Naive thymus-derived CD4-positive, alpha-beta T cell (primary cell): ENCODE measurements at regions of chr10 and their contacts with region 1.

Region 1: GRCh38 chr10:69222157-69223027 is 2.3 kb downstream of the HKDC1 start:
- DNase-seq: peak in 8 of 9 donors; percentile 21 to 80 (median 41)
- ATAC-seq: peak; percentile 88
- H3K4me3 ChIP-seq: peak overlapping the region; percentile 34
- H3K4me3 Mint-ChIP-seq: peak overlapping the region in 4 of 10 donors; percentile 17 to 83 (median 50)
- H3K27ac ChIP-seq: no peak overlapping the region
- H3K27ac Mint-ChIP-seq: peak overlapping the region in 4 of 9 donors; percentile 18 to 91 (median 56)
- H3K4me1 ChIP-seq: peaks cover 11 to 37% of the 10 kb centered on the region in 2 donors
- H3K4me1 Mint-ChIP-seq: peaks cover 0 to 47% (median 15%) of the 10 kb centered on the region in 7 donors
- H3K27me3 ChIP-seq: no peaks in the 10 kb centered on the region
- H3K27me3 Mint-ChIP-seq: no peaks in the 10 kb centered on the region

Region 2: DNA sequence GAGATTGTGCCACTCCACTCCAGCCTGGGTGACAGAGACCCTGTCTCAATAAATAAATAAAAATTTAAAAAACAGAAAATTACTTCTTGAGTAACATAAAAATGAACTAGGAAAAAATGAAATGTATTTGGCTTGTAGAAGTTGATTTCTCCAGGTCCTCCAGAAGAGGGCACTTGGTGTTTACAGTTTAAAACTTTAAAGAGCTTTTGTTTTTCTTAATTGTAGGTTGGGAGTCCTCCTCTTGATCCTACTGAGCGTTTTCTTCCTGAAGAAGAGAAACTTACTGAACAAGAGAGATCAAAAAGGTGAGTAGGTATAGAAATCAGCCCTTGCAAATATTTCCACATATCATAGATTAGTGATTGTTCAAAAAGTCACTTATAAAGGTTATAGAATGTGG is 217.6 kb before region 1 on chr10:
- CTCF ChIA-PET with region 1: no interaction called
- POLR2A ChIA-PET with region 1: no interaction called
- intact Hi-C with region 1: loop called in 1 of 2 experiments (anchors 2 kb)
- DNase-seq: peak in 7 of 9 donors; percentile 42 to 72 (median 60)
- ATAC-seq: peak; percentile 74
- H3K4me3 ChIP-seq: no peak overlapping the region
- H3K4me3 Mint-ChIP-seq: no peak overlapping the region
- H3K27ac ChIP-seq: no peak overlapping the region
- H3K27ac Mint-ChIP-seq: peak overlapping the region in 4 of 9 donors; percentile 23 to 43 (median 28)
- H3K4me1 ChIP-seq: peaks cover 0 to 3% of the 10 kb centered on the region in 2 donors
- H3K4me1 Mint-ChIP-seq: peaks cover 0 to 11% (median 5%) of the 10 kb centered on the region in 7 donors
- H3K27me3 ChIP-seq: no peaks in the 10 kb centered on the region
- H3K27me3 Mint-ChIP-seq: no peaks in the 10 kb centered on the region

Region 3: GRCh38 chr10:69092959-69093850 is 129.2 kb before region 1 on chr10:
- CTCF ChIA-PET with region 1: no interaction called
- POLR2A ChIA-PET with region 1: interaction called, 4 read pairs
- intact Hi-C with region 1: loop called in 1 of 2 experiments (anchors 2 kb)
- DNase-seq: peak; percentile 43 to 89 (median 85)
- ATAC-seq: peak; percentile 61
- H3K4me3 ChIP-seq: peak overlapping the region; percentile 19
- H3K4me3 Mint-ChIP-seq: peak overlapping the region in 7 of 10 donors; percentile 4 to 36 (median 15)
- H3K27ac ChIP-seq: peak overlapping the region; percentile 54
- H3K27ac Mint-ChIP-seq: peak overlapping the region; percentile 23 to 90 (median 63)
- H3K4me1 ChIP-seq: peaks cover 28 to 37% of the 10 kb centered on the region in 2 donors
- H3K4me1 Mint-ChIP-seq: peaks cover 23 to 64% (median 55%) of the 10 kb centered on the region in 7 donors
- H3K27me3 ChIP-seq: no peaks in the 10 kb centered on the region
- H3K27me3 Mint-ChIP-seq: no peaks in the 10 kb centered on the region

Region 4: DNA sequence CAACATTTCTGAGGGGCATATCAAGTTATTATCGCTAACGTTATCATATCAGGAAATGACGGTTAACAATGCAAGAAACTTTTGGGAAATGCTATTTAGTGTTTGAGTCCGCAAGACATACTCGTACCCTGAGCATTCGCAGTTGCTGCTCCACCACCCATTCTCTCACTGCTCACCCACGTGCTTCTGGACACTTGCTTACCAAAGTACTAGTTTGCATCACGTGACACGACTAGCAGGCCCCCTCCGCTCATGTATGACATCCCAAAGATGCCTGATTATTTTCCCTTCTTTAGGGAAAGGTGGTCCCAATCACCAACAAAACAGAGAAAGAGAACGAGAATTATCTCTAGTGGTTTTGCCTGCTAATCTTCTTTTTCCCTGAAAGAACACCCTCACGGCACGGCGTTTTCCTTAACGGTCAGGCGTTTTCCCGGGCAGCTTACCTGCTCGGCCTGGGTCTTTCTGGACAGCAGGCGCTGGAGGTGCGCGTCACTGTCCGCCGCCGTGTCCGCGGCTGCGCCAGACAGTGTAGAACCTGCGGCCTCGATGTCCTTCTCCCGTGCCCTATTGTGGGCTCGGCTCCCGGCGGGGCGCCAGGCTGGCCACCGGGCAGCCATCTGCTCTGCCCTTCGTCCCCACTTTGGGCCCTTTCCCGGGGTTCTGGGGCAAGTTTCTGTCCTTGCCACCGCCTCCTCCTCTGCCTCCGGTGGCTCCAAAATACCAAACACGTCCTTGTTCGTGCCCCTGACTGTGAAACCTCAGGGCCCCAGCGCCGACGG is 42.5 kb before region 1 on chr10 and contains the start of gene SUPV3L1:
- CTCF ChIA-PET with region 1: no interaction called
- POLR2A ChIA-PET with region 1: no interaction called
- intact Hi-C with region 1: loop called (anchors 1 to 2 kb)
- DNase-seq: peak; percentile 72 to 91 (median 87)
- ATAC-seq: peak; percentile 87
- H3K4me3 ChIP-seq: peak within 1 kb of the TSS; percentile 83
- H3K4me3 Mint-ChIP-seq: peak within 1 kb of the TSS; percentile 85 to 98 (median 96)
- H3K27ac ChIP-seq: peak within 1 kb of the TSS; percentile 95
- H3K27ac Mint-ChIP-seq: peak within 1 kb of the TSS; percentile 98 to 100 (median 99)
- H3K4me1 ChIP-seq: peaks cover 12 to 15% of the 10 kb centered on the region in 2 donors
- H3K4me1 Mint-ChIP-seq: peaks cover 22 to 55% (median 38%) of the 10 kb centered on the region in 7 donors
- H3K27me3 ChIP-seq: no peaks in the 10 kb centered on the region
- H3K27me3 Mint-ChIP-seq: no peaks in the 10 kb centered on the region
- total RNA-seq, gene SUPV3L1: 39.3 to 63.2 (median 42.1) TPM

Region 5: GRCh38 chr10:69202332-69202731 is 20.1 kb before region 1 on chr10:
- CTCF ChIA-PET with region 1: no interaction called
- POLR2A ChIA-PET with region 1: no interaction called
- intact Hi-C with region 1: loop called in 1 of 2 experiments (anchors 2 kb)
- DNase-seq: no peak
- ATAC-seq: peak; percentile 67
- H3K4me3 ChIP-seq: no peak overlapping the region
- H3K4me3 Mint-ChIP-seq: peak overlapping the region in 1 of 10 donors; percentile 63
- H3K27ac ChIP-seq: no peak overlapping the region
- H3K27ac Mint-ChIP-seq: peak overlapping the region in 1 of 9 donors; percentile 51
- H3K4me1 ChIP-seq: peaks cover 0 to 35% of the 10 kb centered on the region in 2 donors
- H3K4me1 Mint-ChIP-seq: peaks cover 0 to 60% (median 0%) of the 10 kb centered on the region in 7 donors
- H3K27me3 ChIP-seq: no peaks in the 10 kb centered on the region
- H3K27me3 Mint-ChIP-seq: no peaks in the 10 kb centered on the region

Region 6: GRCh38 chr10:69209787-69210484 is 12.5 kb before region 1 on chr10:
- CTCF ChIA-PET with region 1: no interaction called
- POLR2A ChIA-PET with region 1: no interaction called
- intact Hi-C with region 1: loop called (anchors 2 kb)
- DNase-seq: no peak
- ATAC-seq: no peak
- H3K4me3 ChIP-seq: no peak overlapping the region
- H3K4me3 Mint-ChIP-seq: peak overlapping the region in 1 of 10 donors; percentile 1
- H3K27ac ChIP-seq: no peak overlapping the region
- H3K27ac Mint-ChIP-seq: peak overlapping the region in 3 of 9 donors; percentile 0 to 40 (median 3)
- H3K4me1 ChIP-seq: peaks cover under 1 to 23% of the 10 kb centered on the region in 2 donors
- H3K4me1 Mint-ChIP-seq: peaks cover 0 to 67% (median 5%) of the 10 kb centered on the region in 7 donors
- H3K27me3 ChIP-seq: no peaks in the 10 kb centered on the region
- H3K27me3 Mint-ChIP-seq: no peaks in the 10 kb centered on the region

Region 7: DNA sequence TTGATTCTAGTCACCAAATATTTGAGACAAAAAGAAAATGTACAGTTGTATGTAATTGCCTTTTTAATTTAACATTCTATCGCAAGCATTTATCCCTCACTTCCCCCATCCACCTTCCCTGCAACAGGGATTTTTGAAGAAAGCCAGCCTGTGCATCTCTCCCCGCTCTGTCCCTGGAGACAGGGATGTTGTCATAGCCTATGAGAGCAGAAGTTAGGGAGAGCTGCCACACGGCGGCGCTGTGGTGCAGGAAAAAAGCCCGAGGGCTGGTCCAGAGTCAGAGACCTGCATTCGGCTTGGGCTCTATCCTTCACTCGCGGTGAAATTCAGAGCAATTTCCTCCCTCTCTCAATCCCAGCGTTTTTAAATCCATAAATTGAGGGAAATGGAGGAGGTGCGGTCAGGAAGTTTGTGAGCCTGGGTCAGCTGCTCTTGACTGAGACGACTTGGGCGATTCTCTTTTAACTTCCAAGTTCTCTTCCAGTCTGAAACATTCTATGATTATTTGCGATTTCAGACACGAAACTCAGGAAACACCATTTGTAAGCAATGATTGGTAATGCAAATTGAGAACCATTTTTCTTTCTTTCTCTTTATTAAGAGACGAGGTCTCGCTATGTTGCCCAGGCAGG is 15.3 kb after region 1 on chr10:
- CTCF ChIA-PET with region 1: no interaction called
- POLR2A ChIA-PET with region 1: interaction called, 4 read pairs
- intact Hi-C with region 1: loop called in 1 of 2 experiments (anchors 1 kb)
- DNase-seq: peak; percentile 67 to 88 (median 79)
- ATAC-seq: peak; percentile 93
- H3K4me3 ChIP-seq: no peak overlapping the region
- H3K4me3 Mint-ChIP-seq: peak overlapping the region in 4 of 10 donors; percentile 9 to 36 (median 10)
- H3K27ac ChIP-seq: no peak overlapping the region
- H3K27ac Mint-ChIP-seq: peak overlapping the region in 6 of 9 donors; percentile 2 to 78 (median 20)
- H3K4me1 ChIP-seq: peaks cover 4 to 6% of the 10 kb centered on the region in 2 donors
- H3K4me1 Mint-ChIP-seq: peaks cover 8 to 37% (median 23%) of the 10 kb centered on the region in 7 donors
- H3K27me3 ChIP-seq: no peaks in the 10 kb centered on the region
- H3K27me3 Mint-ChIP-seq: no peaks in the 10 kb centered on the region